IMR-90 (cell line): ENCODE measurements at regions of chr4 and their contacts with region 1.

Region 1: GRCh38 chr4:141158219-141158618 is 24.9 kb upstream of the RNF150 start:
- DNase-seq: peak; percentile 55
- ATAC-seq: peak; percentile 54; the same call in 1 of the 2 replicates
- H3K4me3 ChIP-seq: no peak overlapping the region
- H3K27ac ChIP-seq: no peak overlapping the region
- H3K4me1 ChIP-seq: no peaks in the 10 kb centered on the region
- H3K27me3 ChIP-seq: 0 out of 2 replicates have a peak, but pooled peaks cover 1% of the 10 kb centered on the region
- CTCF ChIP-seq: peak; percentile 67
- POLR2A ChIP-seq: no peak
- RAD21 ChIP-seq: peak; percentile 80

Region 2: DNA sequence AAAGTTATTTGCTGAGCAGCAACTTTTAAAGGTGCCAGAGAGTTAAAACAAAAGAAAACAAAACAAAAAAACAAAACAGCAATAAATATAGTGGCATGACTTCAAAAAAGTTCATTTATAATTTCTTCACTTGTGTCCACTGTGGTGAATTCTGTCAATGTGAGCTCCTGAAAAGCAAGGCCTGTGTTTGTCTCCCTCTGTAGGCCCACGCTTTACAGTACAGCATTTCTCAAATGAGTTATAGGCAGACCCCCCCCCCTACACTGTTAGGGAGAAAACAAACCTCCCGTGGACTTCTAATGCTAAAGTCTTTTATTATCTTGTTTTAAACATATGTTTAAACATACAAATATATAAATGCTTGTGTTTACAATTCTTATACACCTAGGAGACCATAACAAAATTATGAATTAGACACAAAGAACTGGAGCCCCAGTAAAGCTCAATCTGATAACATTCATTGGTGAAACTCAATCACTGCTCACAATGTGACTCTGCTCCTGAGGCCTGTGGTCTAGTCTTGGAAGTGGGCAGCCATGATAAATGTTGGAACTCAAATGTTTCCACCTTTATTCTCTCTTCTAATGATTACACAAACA is 831.7 kb before region 1 on chr4:
- CTCF ChIA-PET with region 1: no interaction called
- POLR2A ChIA-PET with region 1: no interaction called
- dilution Hi-C with region 1: no loop called
- in situ Hi-C with region 1: no loop called
- intact Hi-C with region 1: no loop called
- DNase-seq: peak; percentile 65
- ATAC-seq: peak; percentile 85
- H3K4me3 ChIP-seq: no peak overlapping the region
- H3K27ac ChIP-seq: no peak overlapping the region
- H3K4me1 ChIP-seq: no peaks in the 10 kb centered on the region
- H3K27me3 ChIP-seq: no peaks in the 10 kb centered on the region
- CTCF ChIP-seq: peak; percentile 74
- POLR2A ChIP-seq: no peak
- RAD21 ChIP-seq: peak; percentile 84

Region 3: DNA sequence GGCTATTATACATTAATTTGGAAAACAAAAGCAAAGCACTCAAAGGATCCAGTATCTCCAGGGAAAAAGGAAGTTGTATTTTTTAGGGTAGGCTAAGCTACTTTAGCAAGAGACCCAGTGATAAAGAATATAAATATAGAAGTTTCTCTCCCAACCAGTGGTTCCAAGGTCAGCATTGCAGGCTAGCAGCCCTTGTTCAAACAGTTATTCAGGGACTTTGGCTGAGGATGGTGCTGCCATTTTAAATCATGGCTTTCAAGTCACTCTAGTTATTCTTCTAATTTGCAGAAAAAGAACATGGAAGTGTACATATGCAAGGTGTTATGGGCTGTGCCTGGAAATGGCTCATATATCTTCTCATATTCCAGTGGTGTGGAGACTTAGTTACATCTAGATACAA is 775.5 kb before region 1 on chr4:
- CTCF ChIA-PET with region 1: no interaction called
- POLR2A ChIA-PET with region 1: no interaction called
- dilution Hi-C with region 1: no loop called
- in situ Hi-C with region 1: no loop called
- intact Hi-C with region 1: no loop called
- DNase-seq: no peak
- ATAC-seq: no peak
- H3K4me3 ChIP-seq: no peak overlapping the region
- H3K27ac ChIP-seq: no peak overlapping the region
- H3K4me1 ChIP-seq: no peaks in the 10 kb centered on the region
- H3K27me3 ChIP-seq: no peaks in the 10 kb centered on the region
- CTCF ChIP-seq: no peak
- POLR2A ChIP-seq: no peak
- RAD21 ChIP-seq: no peak

Region 4: DNA sequence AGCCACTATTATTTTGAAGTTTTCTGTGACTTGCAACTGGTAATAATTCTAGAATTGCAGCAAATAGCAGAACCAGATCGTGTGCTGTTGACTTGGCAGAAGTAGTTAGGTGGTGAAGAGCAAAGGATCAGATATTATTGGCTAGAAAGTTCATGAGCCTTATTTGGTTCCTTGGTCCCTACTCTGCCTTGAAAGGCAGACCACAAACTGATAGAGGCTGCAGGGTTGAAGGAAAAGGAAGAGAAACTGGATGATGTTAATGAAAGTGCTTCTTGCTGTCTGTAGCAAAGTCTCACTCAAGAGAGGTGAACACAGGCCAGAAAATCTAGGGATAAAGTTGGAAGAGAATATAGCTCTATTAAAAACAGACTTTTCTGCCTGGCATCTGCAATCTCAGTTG is 16.2 kb after region 1 on chr4:
- CTCF ChIA-PET with region 1: no interaction called
- POLR2A ChIA-PET with region 1: no interaction called
- dilution Hi-C with region 1: no loop called
- in situ Hi-C with region 1: no loop called
- intact Hi-C with region 1: no loop called
- DNase-seq: no peak
- ATAC-seq: no peak
- H3K4me3 ChIP-seq: no peak overlapping the region
- H3K27ac ChIP-seq: no peak overlapping the region
- H3K4me1 ChIP-seq: no peaks in the 10 kb centered on the region
- H3K27me3 ChIP-seq: peaks cover 8% of the 10 kb centered on the region
- CTCF ChIP-seq: no peak
- POLR2A ChIP-seq: no peak
- RAD21 ChIP-seq: no peak

Region 5: GRCh38 chr4:141636082-141636770 is 478.0 kb after region 1 on chr4 and contains the start of gene IL15:
- CTCF ChIA-PET with region 1: no interaction called
- POLR2A ChIA-PET with region 1: no interaction called
- dilution Hi-C with region 1: no loop called
- in situ Hi-C with region 1: no loop called
- intact Hi-C with region 1: loop called (anchors 1 kb)
- DNase-seq: peak; percentile 58
- ATAC-seq: peak; percentile 77
- H3K4me3 ChIP-seq: peak within 1 kb of the TSS; percentile 85
- H3K27ac ChIP-seq: peak within 1 kb of the TSS; percentile 84
- H3K4me1 ChIP-seq: no peaks in the 10 kb centered on the region
- H3K27me3 ChIP-seq: no peaks in the 10 kb centered on the region
- CTCF ChIP-seq: no peak
- POLR2A ChIP-seq: no peak
- RAD21 ChIP-seq: no peak
- total RNA-seq, gene IL15: 5.2 and 5.8 TPM in 2 replicates

Region 6: GRCh38 chr4:141711014-141711610 is 552.9 kb after region 1 on chr4:
- CTCF ChIA-PET with region 1: no interaction called
- POLR2A ChIA-PET with region 1: no interaction called
- dilution Hi-C with region 1: no loop called
- in situ Hi-C with region 1: no loop called
- intact Hi-C with region 1: loop called (anchors 10 kb)
- DNase-seq: peak; percentile 51
- ATAC-seq: peak; percentile 63; the same call in 1 of the 2 replicates
- H3K4me3 ChIP-seq: no peak overlapping the region
- H3K27ac ChIP-seq: no peak overlapping the region
- H3K4me1 ChIP-seq: peaks cover 9% of the 10 kb centered on the region
- H3K27me3 ChIP-seq: no peaks in the 10 kb centered on the region
- CTCF ChIP-seq: peak; percentile 70
- POLR2A ChIP-seq: no peak
- RAD21 ChIP-seq: peak; percentile 72

Region 7: DNA sequence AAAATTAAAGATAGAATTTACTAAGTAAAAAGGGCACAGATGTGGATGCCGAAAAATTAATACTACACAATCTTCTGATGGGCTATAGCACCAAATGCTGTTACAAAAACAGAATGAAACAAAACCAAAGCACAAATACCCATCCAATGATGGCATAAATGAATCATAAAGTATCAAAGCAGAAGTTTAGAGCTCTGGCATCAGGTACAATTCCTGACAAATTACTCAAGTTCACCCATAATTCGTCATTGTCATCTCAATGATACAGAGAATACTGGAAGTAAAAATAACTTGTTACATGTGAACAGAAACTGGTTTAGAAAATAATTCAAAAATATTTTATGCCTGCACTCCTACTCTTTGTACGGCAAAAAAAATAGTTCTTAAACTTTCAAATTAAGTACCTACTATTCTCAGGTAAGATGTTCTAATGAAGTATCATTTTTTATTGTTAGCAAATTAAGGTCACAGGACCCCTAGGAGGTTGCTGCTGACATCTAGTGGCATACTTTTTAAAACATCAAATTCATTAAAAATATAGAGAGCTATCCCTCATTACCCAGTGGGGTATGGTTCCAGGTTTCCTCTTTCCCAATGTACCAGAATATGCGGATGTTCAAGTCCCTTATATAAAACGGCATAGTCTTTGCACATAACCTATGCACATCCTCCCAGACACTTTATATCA is 1561.8 kb after region 1 on chr4:
- CTCF ChIA-PET with region 1: no interaction called
- POLR2A ChIA-PET with region 1: no interaction called
- dilution Hi-C with region 1: no loop called
- in situ Hi-C with region 1: loop called (anchors 25 kb)
- intact Hi-C with region 1: no loop called
- DNase-seq: peak; percentile 21
- ATAC-seq: peak; percentile 37; the same call in 1 of the 2 replicates
- H3K4me3 ChIP-seq: no peak overlapping the region
- H3K27ac ChIP-seq: no peak overlapping the region
- H3K4me1 ChIP-seq: no peaks in the 10 kb centered on the region
- H3K27me3 ChIP-seq: no peaks in the 10 kb centered on the region
- CTCF ChIP-seq: peak; percentile 57
- POLR2A ChIP-seq: no peak
- RAD21 ChIP-seq: peak; percentile 67

Region 8: GRCh38 chr4:142840516-142841123 is 1682.4 kb after region 1 on chr4:
- CTCF ChIA-PET with region 1: no interaction called
- POLR2A ChIA-PET with region 1: no interaction called
- dilution Hi-C with region 1: no loop called
- in situ Hi-C with region 1: loop called (anchors 25 kb)
- intact Hi-C with region 1: loop called (anchors 5 kb)
- DNase-seq: peak; percentile 68
- ATAC-seq: no peak
- H3K4me3 ChIP-seq: no peak overlapping the region
- H3K27ac ChIP-seq: no peak overlapping the region
- H3K4me1 ChIP-seq: peaks cover 2% of the 10 kb centered on the region; the same call in 1 of the 2 replicates
- H3K27me3 ChIP-seq: no peaks in the 10 kb centered on the region
- CTCF ChIP-seq: peak; percentile 83
- POLR2A ChIP-seq: no peak
- RAD21 ChIP-seq: peak; percentile 77

Region 9: DNA sequence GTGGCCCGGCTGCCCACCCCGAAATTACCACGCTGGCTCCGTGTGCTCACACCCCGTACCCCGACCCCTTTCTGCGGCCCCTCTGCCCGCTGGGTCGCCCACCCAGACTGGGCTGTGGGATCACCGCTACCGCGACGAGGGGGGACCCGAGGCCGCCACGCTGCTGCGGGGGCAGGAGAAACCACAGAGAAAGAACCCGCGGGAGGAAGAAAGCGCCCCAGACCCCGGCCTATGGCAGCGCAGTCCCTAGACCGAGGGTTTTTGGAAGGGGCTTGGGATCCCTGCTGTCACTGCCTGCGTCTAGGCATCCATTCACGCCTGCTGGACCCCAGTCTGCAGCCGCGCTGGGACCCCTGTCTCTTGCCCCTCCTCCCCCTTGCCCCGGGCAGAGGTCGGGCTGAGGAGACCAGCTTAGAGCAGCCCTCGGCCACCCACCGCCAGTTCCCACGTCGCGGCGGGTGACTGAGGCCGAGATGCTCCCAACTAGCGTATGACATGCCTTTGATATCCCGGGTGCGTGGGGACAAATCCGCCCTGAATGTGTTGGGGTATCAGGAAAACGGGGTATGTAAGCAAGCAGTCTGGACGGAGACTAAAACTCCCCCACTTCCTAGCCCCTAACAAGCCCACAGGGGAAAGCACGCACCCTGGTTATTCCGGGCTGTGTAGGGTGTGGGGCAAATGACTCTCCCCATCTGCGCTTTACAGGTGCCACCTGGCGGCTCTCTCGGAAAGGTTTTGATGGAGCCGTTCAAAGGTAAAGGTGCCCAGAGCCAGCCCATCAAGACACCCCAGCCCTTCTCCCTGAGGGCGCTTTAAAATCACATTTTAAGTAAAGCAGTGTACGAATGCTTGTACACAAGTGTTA is 1688.7 kb after region 1 on chr4:
- CTCF ChIA-PET with region 1: no interaction called
- POLR2A ChIA-PET with region 1: no interaction called
- dilution Hi-C with region 1: no loop called
- in situ Hi-C with region 1: loop called (anchors 25 kb)
- intact Hi-C with region 1: loop called (anchors 5 kb)
- DNase-seq: no peak
- ATAC-seq: peak; percentile 19; the same call in 1 of the 2 replicates
- H3K4me3 ChIP-seq: peak overlapping the region; percentile 61
- H3K27ac ChIP-seq: peak overlapping the region; percentile 25; the same call in 1 of the 2 replicates
- H3K4me1 ChIP-seq: no peaks in the 10 kb centered on the region
- H3K27me3 ChIP-seq: peaks cover 10% of the 10 kb centered on the region
- CTCF ChIP-seq: no peak
- POLR2A ChIP-seq: no peak
- RAD21 ChIP-seq: no peak

Region 10: DNA sequence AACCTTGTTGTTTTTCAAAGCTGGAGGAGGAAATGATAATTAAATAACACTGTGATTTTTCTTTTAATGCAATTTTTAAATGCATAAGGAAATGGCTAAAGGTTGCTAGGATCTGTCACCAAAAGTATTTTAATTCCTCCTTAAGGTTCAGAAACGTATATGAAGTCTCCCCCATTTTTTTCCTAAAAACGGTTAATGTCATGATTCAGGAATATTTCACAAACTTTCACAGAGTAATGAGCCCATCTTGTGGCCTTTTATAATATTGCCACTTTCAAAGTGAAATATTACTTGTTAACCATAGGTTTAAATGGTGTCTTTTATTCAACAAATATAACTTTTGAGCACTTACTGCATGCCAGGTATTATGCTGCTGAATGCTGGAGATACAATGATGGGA is 1927.0 kb after region 1 on chr4:
- CTCF ChIA-PET with region 1: no interaction called
- POLR2A ChIA-PET with region 1: no interaction called
- dilution Hi-C with region 1: no loop called
- in situ Hi-C with region 1: loop called (anchors 25 kb)
- intact Hi-C with region 1: loop called (anchors 5 kb)
- DNase-seq: peak; percentile 8
- ATAC-seq: peak; percentile 40; the same call in 1 of the 2 replicates
- H3K4me3 ChIP-seq: no peak overlapping the region
- H3K27ac ChIP-seq: no peak overlapping the region
- H3K4me1 ChIP-seq: no peaks in the 10 kb centered on the region
- H3K27me3 ChIP-seq: no peaks in the 10 kb centered on the region
- CTCF ChIP-seq: peak; percentile 41
- POLR2A ChIP-seq: no peak
- RAD21 ChIP-seq: peak; percentile 46